Sigmoid colon (tissue), 7 donors: ENCODE measurements at regions of chr11 and their contacts with region 1.

Region 1: GRCh38 chr11:86068951-86069407 is at the start of gene PICALM:
- DNase-seq: peak; percentile 99
- H3K4me3 ChIP-seq: peak within 1 kb of the TSS; percentile 88 to 98 (median 94)
- H3K27ac ChIP-seq: peak within 1 kb of the TSS; percentile 95 to 99 (median 97)
- H3K4me1 ChIP-seq: peaks cover 0 to 37% (median 31%) of the 10 kb centered on the region in 4 donors
- H3K27me3 ChIP-seq: no peaks in the 10 kb centered on the region
- CTCF ChIP-seq: no peak
- EP300 ChIP-seq: peak in 2 of 4 donors; percentile 54 to 93
- POLR2A ChIP-seq: peak; percentile 74 to 75
- total RNA-seq, gene PICALM: 213 to 250 (median 230) TPM

Region 2: GRCh38 chr11:85682330-85683305 is 386.4 kb before region 1 on chr11:
- intact Hi-C with region 1: loop called (anchors 10 kb)
- DNase-seq: peak; percentile 84
- H3K4me3 ChIP-seq: peak overlapping the region; percentile 46 to 65 (median 63)
- H3K27ac ChIP-seq: peak overlapping the region; percentile 32 to 66 (median 60)
- H3K4me1 ChIP-seq: peaks cover 0 to 21% (median 12%) of the 10 kb centered on the region in 4 donors
- H3K27me3 ChIP-seq: no peaks in the 10 kb centered on the region
- CTCF ChIP-seq: no peak
- EP300 ChIP-seq: no peak
- POLR2A ChIP-seq: no peak

Region 3: GRCh38 chr11:85974122-85974521 is 94.9 kb before region 1 on chr11:
- intact Hi-C with region 1: no loop called
- DNase-seq: no peak
- H3K4me3 ChIP-seq: no peak overlapping the region
- H3K27ac ChIP-seq: peak overlapping the region in 1 of 4 donors; percentile 2
- H3K4me1 ChIP-seq: peaks cover 0 to 23% (median 11%) of the 10 kb centered on the region in 4 donors
- H3K27me3 ChIP-seq: no peaks in the 10 kb centered on the region
- CTCF ChIP-seq: no peak
- EP300 ChIP-seq: no peak
- POLR2A ChIP-seq: no peak

Region 4: GRCh38 chr11:86119062-86119461 is 50.1 kb after region 1 on chr11:
- intact Hi-C with region 1: loop called (anchors 2 kb)
- DNase-seq: peak; percentile 72
- H3K4me3 ChIP-seq: no peak overlapping the region
- H3K27ac ChIP-seq: peak overlapping the region; percentile 39 to 76 (median 55)
- H3K4me1 ChIP-seq: peaks cover 0 to 48% (median 39%) of the 10 kb centered on the region in 4 donors
- H3K27me3 ChIP-seq: no peaks in the 10 kb centered on the region
- CTCF ChIP-seq: no peak
- EP300 ChIP-seq: peak; percentile 44 to 92 (median 83)
- POLR2A ChIP-seq: no peak

Region 5: GRCh38 chr11:86193297-86194095 is 124.5 kb after region 1 on chr11:
- intact Hi-C with region 1: loop called (anchors 5 kb)
- DNase-seq: peak; percentile 77
- H3K4me3 ChIP-seq: peak overlapping the region in 2 of 4 donors; percentile 11 to 16
- H3K27ac ChIP-seq: peak overlapping the region in 3 of 4 donors; percentile 43 to 45 (median 44)
- H3K4me1 ChIP-seq: peaks cover 0 to 35% (median 23%) of the 10 kb centered on the region in 4 donors
- H3K27me3 ChIP-seq: no peaks in the 10 kb centered on the region
- CTCF ChIP-seq: peak; percentile 56 to 82 (median 73)
- EP300 ChIP-seq: peak in 1 of 4 donors; percentile 83
- POLR2A ChIP-seq: no peak

Region 6: DNA sequence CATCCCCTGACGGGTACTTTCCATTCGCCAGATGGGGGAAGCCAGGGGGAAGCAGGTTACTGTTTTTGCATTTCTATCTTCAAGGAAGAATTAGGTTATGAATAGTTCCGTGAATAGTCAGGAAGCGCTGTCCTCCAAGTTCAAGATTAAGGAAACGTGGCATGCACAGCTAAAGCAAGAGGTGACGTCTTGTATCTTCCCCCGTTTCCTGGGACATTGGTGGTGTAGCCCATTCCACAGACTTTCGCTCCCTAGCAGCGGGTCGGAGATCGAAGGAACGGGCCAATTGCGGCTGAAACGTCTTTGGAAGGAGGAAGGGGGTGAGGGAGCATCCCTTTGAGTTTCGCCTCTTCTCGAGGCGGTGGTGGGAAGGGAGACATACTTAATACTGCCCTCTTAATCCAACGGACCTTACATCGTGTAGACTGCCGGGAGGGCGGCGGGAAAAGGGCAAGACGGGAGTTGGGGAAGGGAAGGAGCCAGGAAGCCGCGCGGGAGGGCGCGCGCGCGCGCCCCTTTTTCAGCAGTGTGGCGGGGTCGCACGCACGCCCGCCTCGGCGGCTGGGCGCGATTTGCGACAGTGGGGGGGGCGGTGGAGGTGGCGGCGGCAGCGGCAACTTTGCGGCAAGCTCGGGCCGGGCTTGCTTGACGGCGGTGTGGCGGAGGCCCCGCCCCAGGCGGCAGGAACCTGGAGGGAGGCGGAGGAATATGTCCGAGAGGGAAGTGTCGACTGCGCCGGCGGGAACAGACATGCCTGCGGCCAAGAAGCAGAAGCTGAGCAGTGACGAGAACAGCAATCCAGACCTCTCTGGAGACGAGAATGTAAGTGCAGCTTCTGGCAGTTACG is 175.8 kb after region 1 on chr11 and contains the start of gene EED:
- intact Hi-C with region 1: loop called (anchors 2 kb)
- DNase-seq: peak; percentile 97
- H3K4me3 ChIP-seq: peak within 1 kb of the TSS; percentile 68 to 96 (median 75)
- H3K27ac ChIP-seq: peak within 1 kb of the TSS; percentile 95 to 100 (median 98)
- H3K4me1 ChIP-seq: peaks cover 0 to 42% (median 31%) of the 10 kb centered on the region in 4 donors
- H3K27me3 ChIP-seq: no peaks in the 10 kb centered on the region
- CTCF ChIP-seq: no peak
- EP300 ChIP-seq: no peak
- POLR2A ChIP-seq: peak; percentile 29 to 46
- total RNA-seq, gene EED: 18.2 to 28.6 (median 23.5) TPM

Region 7: GRCh38 chr11:86302100-86302793 is 233.3 kb after region 1 on chr11 and contains the start of gene HIKESHI:
- intact Hi-C with region 1: loop called (anchors 5 kb)
- DNase-seq: peak; percentile 100
- H3K4me3 ChIP-seq: peak within 1 kb of the TSS; percentile 70 to 91 (median 79)
- H3K27ac ChIP-seq: peak within 1 kb of the TSS; percentile 84 to 94 (median 89)
- H3K4me1 ChIP-seq: peaks cover 0 to 21% (median 20%) of the 10 kb centered on the region in 4 donors
- H3K27me3 ChIP-seq: no peaks in the 10 kb centered on the region
- CTCF ChIP-seq: no peak
- EP300 ChIP-seq: peak in 1 of 4 donors; percentile 58
- POLR2A ChIP-seq: peak in 1 of 2 donors; percentile 42
- total RNA-seq, gene HIKESHI: 59.8 to 71.3 (median 65.2) TPM